ENCODE measurements at regions of chr20 and their contacts with region 1.

Region 1: GRCh38 chr20:31630187-31630790 is 7.4 kb upstream of the COX4I2 start:
- H3K4me3 ChIP-seq: no peak overlapping the region
- H3K27ac ChIP-seq: no peak overlapping the region
- H3K4me1 ChIP-seq: no peaks in the 10 kb centered on the region
- CTCF ChIP-seq: no peak

Region 2: GRCh38 chr20:31485450-31486339 is 144.6 kb before region 1 on chr20:
- CTCF ChIA-PET with region 1: no interaction called
- POLR2A ChIA-PET with region 1: no interaction called
- H3K4me3 ChIP-seq: no peak overlapping the region
- H3K27ac ChIP-seq: no peak overlapping the region
- H3K4me1 ChIP-seq: no peaks in the 10 kb centered on the region
- CTCF ChIP-seq: no peak

Region 3: GRCh38 chr20:31620252-31620651 is 10.0 kb before region 1 on chr20:
- CTCF ChIA-PET with region 1: interaction called, 12 read pairs
- POLR2A ChIA-PET with region 1: no interaction called
- H3K4me3 ChIP-seq: no peak overlapping the region
- H3K27ac ChIP-seq: no peak overlapping the region
- H3K4me1 ChIP-seq: no peaks in the 10 kb centered on the region
- CTCF ChIP-seq: no peak

Region 4: GRCh38 chr20:31644701-31645100 is 14.4 kb after region 1 on chr20:
- CTCF ChIA-PET with region 1: interaction called, 15 read pairs
- POLR2A ChIA-PET with region 1: no interaction called
- H3K4me3 ChIP-seq: no peak overlapping the region
- H3K27ac ChIP-seq: no peak overlapping the region
- H3K4me1 ChIP-seq: no peaks in the 10 kb centered on the region
- CTCF ChIP-seq: no peak

Region 5: DNA sequence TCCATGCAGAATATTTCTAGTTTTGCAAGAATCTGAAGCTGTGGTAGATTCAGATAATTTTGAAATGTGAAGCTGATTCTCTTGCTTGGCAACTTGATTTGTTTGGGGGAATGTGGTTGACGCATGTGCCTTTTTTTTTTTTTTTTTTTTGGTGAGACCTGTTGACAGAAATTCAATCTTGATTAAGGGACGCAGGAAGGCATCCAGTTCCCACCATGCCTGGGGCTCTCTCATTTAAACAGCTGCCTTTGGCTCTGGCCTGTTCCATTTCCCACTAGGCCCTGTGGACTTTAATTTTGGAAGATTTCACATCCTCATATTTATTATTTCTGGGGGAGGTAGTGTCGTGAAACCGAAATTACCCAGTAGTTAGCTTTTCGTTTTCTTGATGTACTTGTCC is 117.4 kb after region 1 on chr20:
- CTCF ChIA-PET with region 1: no interaction called
- POLR2A ChIA-PET with region 1: no interaction called
- H3K4me3 ChIP-seq: no peak overlapping the region
- H3K27ac ChIP-seq: no peak overlapping the region
- H3K4me1 ChIP-seq: peaks cover 15% of the 10 kb centered on the region
- CTCF ChIP-seq: no peak